ENCODE measurements at regions of chr2 and their contacts with region 1.

Region 1: GRCh38 chr2:96344011-96344410 is 8.4 kb downstream of the NCAPH start:
- DNase-seq: no peak
- H3K4me3 ChIP-seq: no peak overlapping the region
- H3K27ac ChIP-seq: no peak overlapping the region
- H3K4me1 ChIP-seq: no peaks in the 10 kb centered on the region
- CTCF ChIP-seq: no peak

Region 2: DNA sequence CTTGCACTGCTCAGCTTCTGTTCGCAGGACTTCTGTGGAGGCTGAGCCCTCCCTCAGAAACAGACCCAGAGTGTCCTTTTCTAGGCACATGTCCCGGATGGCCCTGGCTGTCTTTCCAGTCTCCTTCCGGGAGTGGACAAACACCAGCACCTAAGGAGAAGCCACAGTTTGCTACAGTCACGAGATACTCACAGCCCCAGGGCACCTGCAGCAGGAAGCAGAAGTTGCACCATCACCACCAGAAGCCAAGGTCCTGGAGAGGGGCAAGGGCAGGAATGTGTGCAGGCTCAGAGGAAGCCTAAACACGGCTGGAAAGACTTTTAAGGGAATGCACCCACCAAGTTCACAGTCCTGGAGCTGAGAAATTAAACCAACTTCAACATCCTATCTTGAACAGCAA is 52.3 kb before region 1 on chr2:
- CTCF ChIA-PET with region 1: no interaction called
- POLR2A ChIA-PET with region 1: interaction called, 6 read pairs
- intact Hi-C with region 1: loop called (anchors 5 kb)
- DNase-seq: no peak
- H3K4me3 ChIP-seq: no peak overlapping the region
- H3K27ac ChIP-seq: no peak overlapping the region
- H3K4me1 ChIP-seq: no peaks in the 10 kb centered on the region
- CTCF ChIP-seq: no peak

Measured in OCI-LY7 (cell line).